ENCODE measurements at regions of chr2 and their contacts with region 1.

Region 1: DNA sequence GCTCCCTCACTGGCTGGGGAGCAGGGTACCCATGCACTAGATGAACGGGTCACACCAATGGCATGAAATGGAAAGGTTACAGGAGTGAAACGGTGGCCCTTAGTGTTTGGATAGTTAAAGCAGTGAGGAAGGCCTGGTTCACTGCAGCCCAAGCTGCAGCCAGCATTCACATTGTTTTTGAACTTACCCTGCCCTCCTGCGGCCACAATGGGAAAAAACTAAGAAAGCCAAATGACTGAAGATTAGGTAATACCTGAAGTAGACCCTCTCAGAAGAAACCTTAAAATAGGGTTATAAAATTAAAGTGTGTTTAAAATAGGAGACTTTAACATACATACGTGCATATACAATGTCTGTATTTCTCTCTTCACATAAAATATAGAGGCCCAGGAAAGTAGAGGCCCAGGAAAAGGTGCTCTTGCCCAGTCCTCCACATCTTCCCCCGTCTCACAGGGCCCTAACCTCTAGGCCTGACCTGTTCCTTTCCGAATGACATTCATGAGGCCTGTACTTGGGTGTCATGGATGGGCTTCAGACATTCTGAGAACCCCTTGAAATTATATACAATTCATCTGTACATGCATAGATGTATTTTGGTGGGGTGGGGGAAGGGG is 33.3 kb downstream of the DOK1 start:
- DNase-seq: peak; percentile 66 to 70
- H3K4me3 ChIP-seq: no peak overlapping the region
- H3K27ac ChIP-seq: no peak overlapping the region
- H3K4me1 ChIP-seq: peaks cover 0 to 4% of the 10 kb centered on the region in 2 donors
- H3K27me3 ChIP-seq: no peaks in the 10 kb centered on the region
- CTCF ChIP-seq: peak; percentile 39 to 75 (median 66)
- POLR2A ChIP-seq: no peak

Region 2: DNA sequence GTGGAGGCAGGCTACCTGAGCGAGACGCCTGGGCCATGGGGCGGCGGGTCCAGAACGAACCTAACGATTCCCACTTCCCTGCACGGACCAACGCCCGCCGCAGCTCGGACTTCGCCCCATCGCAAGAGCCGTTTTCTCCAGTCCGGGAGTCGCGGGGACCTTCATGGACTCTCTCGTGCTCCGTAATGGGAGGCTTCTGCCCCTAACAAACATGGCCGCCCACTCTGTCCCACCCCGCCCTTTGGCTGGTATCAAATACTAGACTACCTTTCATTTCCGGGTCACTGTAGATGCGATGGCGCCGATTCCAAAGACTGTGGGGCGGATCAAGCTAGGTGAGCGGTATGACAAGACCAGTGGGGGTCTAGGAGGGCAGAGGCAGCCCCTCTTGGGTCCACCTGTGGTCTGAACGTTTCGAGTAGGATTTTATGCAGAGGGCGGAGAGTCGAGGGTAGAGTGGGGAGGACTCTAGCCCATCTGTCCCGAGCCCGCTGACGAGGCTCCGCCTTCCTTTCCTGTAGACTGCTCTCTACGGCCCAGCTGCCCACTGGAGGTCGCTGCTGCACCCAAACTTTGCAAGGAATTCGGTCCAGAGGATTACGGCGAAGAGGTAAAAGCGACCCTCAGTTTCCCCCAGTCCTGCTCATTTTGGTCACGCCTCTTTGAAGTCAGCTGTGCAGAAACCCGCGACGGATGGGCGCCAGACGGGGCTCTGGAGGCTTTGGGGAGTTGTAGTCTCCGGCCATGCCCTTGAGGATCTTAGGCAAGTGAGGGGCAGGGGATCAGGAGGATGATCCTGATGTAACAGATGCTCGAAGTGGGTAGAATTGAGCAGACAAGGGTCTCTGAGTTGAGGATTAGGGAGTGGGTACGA is 104.7 kb before region 1 on chr2 and contains the starts of genes CCDC142 and TTC31:
- intact Hi-C with region 1: loop called (anchors 2 kb)
- DNase-seq: peak; percentile 97 to 98
- H3K4me3 ChIP-seq: peak within 1 kb of the TSS; percentile 49 to 87 (median 84)
- H3K27ac ChIP-seq: peak within 1 kb of the TSS; percentile 38 to 91 (median 87)
- H3K4me1 ChIP-seq: peaks cover 22 to 27% of the 10 kb centered on the region in 2 donors
- H3K27me3 ChIP-seq: no peaks in the 10 kb centered on the region
- CTCF ChIP-seq: peak; percentile 52 to 95 (median 88)
- POLR2A ChIP-seq: peak in 1 of 2 donors; percentile 54
- total RNA-seq, gene CCDC142: 13.6 to 58.7 (median 31.3) TPM
- total RNA-seq, gene TTC31: 18.9 to 38.0 (median 22.4) TPM

Region 3: GRCh38 chr2:74529357-74530238 is 58.2 kb before region 1 on chr2 and contains the starts of genes AUP1 and HTRA2:
- intact Hi-C with region 1: loop called (anchors 10 kb)
- DNase-seq: peak; percentile 99
- H3K4me3 ChIP-seq: peak within 1 kb of the TSS; percentile 71 to 100 (median 72)
- H3K27ac ChIP-seq: peak within 1 kb of the TSS; percentile 78 to 90 (median 81)
- H3K4me1 ChIP-seq: peaks cover 10 to 18% of the 10 kb centered on the region in 2 donors
- H3K27me3 ChIP-seq: no peaks in the 10 kb centered on the region
- CTCF ChIP-seq: no peak
- POLR2A ChIP-seq: peak in 1 of 2 donors; percentile 78
- total RNA-seq, gene AUP1: 93.7 to 168 (median 112) TPM
- total RNA-seq, gene HTRA2: 27.3 to 45.9 (median 37.5) TPM

Region 4: GRCh38 chr2:74696829-74697228 is 109.1 kb after region 1 on chr2:
- intact Hi-C with region 1: no loop called
- DNase-seq: no peak
- H3K4me3 ChIP-seq: no peak overlapping the region
- H3K27ac ChIP-seq: no peak overlapping the region
- H3K4me1 ChIP-seq: no peaks in the 10 kb centered on the region
- H3K27me3 ChIP-seq: no peaks in the 10 kb centered on the region
- CTCF ChIP-seq: no peak
- POLR2A ChIP-seq: no peak